ENCODE measurements at regions of chr6 and their contacts with region 1.

Region 1: GRCh38 chr6:90478789-90479602 is 107.9 kb downstream of the MAP3K7 start:
- DNase-seq: peak; percentile 81
- ATAC-seq: peak; percentile 89
- H3K4me3 Mint-ChIP-seq: no peak overlapping the region; the same call in 1 of the 2 replicates
- H3K27ac Mint-ChIP-seq: peak overlapping the region; percentile 43
- H3K4me1 Mint-ChIP-seq: peaks cover 33% of the 10 kb centered on the region
- H3K27me3 Mint-ChIP-seq: no peaks in the 10 kb centered on the region
- CTCF ChIP-seq: peak; percentile 86

Region 2: GRCh38 chr6:90285611-90286381 is 193.2 kb before region 1 on chr6:
- CTCF ChIA-PET with region 1: interaction called, 125 read pairs
- POLR2A ChIA-PET with region 1: no interaction called
- DNase-seq: peak; percentile 62
- ATAC-seq: peak; percentile 75
- H3K4me3 Mint-ChIP-seq: peak overlapping the region; percentile 24; the same call in 1 of the 2 replicates
- H3K27ac Mint-ChIP-seq: peak overlapping the region; percentile 3; the same call in 1 of the 2 replicates
- H3K4me1 Mint-ChIP-seq: peaks cover 45% of the 10 kb centered on the region
- H3K27me3 Mint-ChIP-seq: no peaks in the 10 kb centered on the region
- CTCF ChIP-seq: no peak

Region 3: GRCh38 chr6:90393232-90393884 is 85.6 kb before region 1 on chr6:
- CTCF ChIA-PET with region 1: interaction called, 27 read pairs
- POLR2A ChIA-PET with region 1: no interaction called
- DNase-seq: peak; percentile 69
- ATAC-seq: peak; percentile 92
- H3K4me3 Mint-ChIP-seq: no peak overlapping the region
- H3K27ac Mint-ChIP-seq: no peak overlapping the region
- H3K4me1 Mint-ChIP-seq: peaks cover 26% of the 10 kb centered on the region
- H3K27me3 Mint-ChIP-seq: peaks cover 2% of the 10 kb centered on the region; the same call in 1 of the 2 replicates
- CTCF ChIP-seq: peak; percentile 56

Region 4: DNA sequence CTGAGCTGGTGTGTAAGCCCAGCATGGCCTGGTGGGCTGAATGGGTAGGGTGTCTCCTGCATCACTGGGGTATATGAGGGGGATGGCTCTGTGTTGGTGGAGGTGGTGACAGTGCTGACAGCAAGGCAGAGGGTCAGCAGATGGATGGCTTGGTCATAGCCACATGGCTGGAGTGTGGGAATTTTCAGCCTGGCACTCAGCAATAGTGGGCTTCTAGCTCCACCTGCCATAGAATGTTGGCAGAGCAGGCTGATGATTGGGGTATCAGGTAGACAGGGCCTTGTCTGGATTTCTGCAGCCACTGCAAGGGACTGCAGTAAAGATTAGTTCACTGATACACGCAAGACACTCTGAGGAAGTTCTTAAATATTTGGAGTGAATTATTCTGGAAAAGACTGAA is 44.9 kb before region 1 on chr6:
- CTCF ChIA-PET with region 1: interaction called, 37 read pairs
- POLR2A ChIA-PET with region 1: no interaction called
- DNase-seq: peak; percentile 28
- ATAC-seq: peak; percentile 77
- H3K4me3 Mint-ChIP-seq: no peak overlapping the region
- H3K27ac Mint-ChIP-seq: no peak overlapping the region
- H3K4me1 Mint-ChIP-seq: peaks cover 50% of the 10 kb centered on the region
- H3K27me3 Mint-ChIP-seq: peaks cover 6% of the 10 kb centered on the region
- CTCF ChIP-seq: peak; percentile 22; the same call in 1 of the 2 replicates

Region 5: DNA sequence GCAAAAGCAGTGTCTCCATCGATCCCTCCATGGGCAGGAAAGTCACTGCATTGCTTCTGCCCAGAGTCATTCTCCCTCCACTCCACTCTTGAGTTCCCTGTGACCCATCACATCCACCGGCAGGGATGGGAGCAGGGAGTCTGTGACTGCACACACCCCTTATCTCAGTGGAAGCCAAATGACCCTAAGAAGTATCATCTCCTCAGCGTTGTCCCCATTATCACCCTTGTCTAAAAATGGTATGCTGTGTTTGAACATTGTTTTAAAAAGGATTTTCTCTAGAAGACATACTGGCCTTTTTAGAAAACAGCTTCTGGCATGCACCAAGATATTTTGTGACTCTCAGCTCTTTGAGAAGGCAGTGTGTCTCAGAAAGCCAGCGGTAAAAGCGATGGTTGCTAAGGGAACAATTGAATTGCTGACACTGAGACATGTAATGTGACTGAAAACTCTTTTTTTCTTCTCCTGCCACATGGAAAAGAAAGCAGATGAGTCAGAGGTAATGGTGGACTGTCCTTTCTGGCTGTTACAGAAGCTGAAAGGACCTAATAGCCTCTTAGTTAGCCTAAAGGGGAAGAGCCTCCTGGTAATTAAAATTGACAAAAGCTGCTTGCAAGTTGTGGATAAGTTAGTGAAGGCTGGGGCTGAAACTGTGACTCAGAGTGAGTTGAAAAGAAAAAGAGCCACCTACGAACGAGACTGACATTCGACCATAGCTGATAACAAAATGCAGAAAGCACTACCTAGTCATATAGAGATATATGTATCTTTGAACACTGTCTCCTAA is 12.6 kb before region 1 on chr6:
- CTCF ChIA-PET with region 1: interaction called, 13 read pairs
- POLR2A ChIA-PET with region 1: no interaction called
- DNase-seq: no peak
- ATAC-seq: no peak
- H3K4me3 Mint-ChIP-seq: no peak overlapping the region
- H3K27ac Mint-ChIP-seq: no peak overlapping the region
- H3K4me1 Mint-ChIP-seq: peaks cover 4% of the 10 kb centered on the region; the same call in 1 of the 2 replicates
- H3K27me3 Mint-ChIP-seq: no peaks in the 10 kb centered on the region
- CTCF ChIP-seq: no peak

Region 6: DNA sequence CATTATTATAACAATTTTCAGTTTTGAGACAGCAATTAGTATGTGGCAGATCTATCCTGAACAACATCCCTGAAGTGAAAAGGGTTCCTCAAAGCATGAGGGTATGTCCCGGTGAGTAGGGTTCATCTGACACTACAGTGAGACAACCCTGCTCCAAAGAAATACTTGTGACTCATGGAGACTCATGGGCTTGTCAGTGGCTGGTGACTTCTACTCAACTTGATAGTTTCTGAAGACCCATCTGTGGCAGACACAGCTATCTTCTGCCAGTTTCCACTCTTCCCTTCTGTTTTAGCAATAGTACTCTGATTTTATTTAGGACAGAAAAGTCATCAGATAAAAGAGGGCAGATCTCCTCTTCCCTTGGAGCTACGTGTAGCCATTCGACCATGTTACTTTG is 66.5 kb after region 1 on chr6:
- CTCF ChIA-PET with region 1: no interaction called
- POLR2A ChIA-PET with region 1: no interaction called
- DNase-seq: no peak
- ATAC-seq: no peak
- H3K4me3 Mint-ChIP-seq: no peak overlapping the region
- H3K27ac Mint-ChIP-seq: no peak overlapping the region
- H3K4me1 Mint-ChIP-seq: no peaks in the 10 kb centered on the region
- H3K27me3 Mint-ChIP-seq: no peaks in the 10 kb centered on the region
- CTCF ChIP-seq: no peak